ENCODE measurements at regions of chr6 and their contacts with region 1.

Region 1: GRCh38 chr6:113909234-113909856 is 52.2 kb downstream of the MARCKS start:
- DNase-seq: peak; percentile 60
- CTCF ChIP-seq: peak; percentile 33

Region 2: GRCh38 chr6:112180095-112180820 is 1729.1 kb before region 1 on chr6:
- CTCF ChIA-PET with region 1: interaction called, 21 read pairs
- POLR2A ChIA-PET with region 1: no interaction called
- DNase-seq: peak; percentile 58
- CTCF ChIP-seq: peak; percentile 61

Region 3: DNA sequence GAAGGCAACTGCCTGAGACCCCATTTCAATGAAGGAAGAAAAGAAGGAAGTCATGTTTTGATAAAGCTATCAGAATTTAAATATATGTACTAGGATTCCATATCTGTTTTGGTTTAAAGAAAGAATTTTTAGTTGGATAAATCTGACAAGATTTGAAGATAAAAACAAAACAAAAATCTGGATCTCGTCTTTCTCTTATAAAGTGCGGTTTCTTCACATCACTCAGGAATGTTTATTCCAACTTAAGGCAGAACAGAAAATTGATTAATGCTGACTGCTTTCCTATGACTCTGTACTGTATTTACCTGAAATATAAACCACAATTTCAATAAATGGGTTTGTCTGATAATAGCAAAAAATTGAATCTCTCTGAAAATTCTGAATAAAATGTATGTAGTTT is 1122.5 kb before region 1 on chr6:
- CTCF ChIA-PET with region 1: interaction called, 19 read pairs
- POLR2A ChIA-PET with region 1: no interaction called
- DNase-seq: no peak
- CTCF ChIP-seq: no peak

Region 4: GRCh38 chr6:113888493-113888892 is 20.9 kb before region 1 on chr6:
- CTCF ChIA-PET with region 1: interaction called, 20 read pairs
- POLR2A ChIA-PET with region 1: no interaction called
- DNase-seq: no peak
- CTCF ChIP-seq: no peak

Region 5: GRCh38 chr6:113920663-113921267 is 11.4 kb after region 1 on chr6:
- CTCF ChIA-PET with region 1: interaction called, 15 read pairs
- POLR2A ChIA-PET with region 1: no interaction called
- DNase-seq: no peak
- CTCF ChIP-seq: no peak